Activated B cell treated with CpG ODN at 0.5 μM for 24 hours (primary cell): ENCODE measurements at regions of chr3 and their contacts with region 1.

Region 1: GRCh38 chr3:185282696-185283394 is 29.0 kb upstream of the EHHADH start:
- DNase-seq: peak; percentile 90
- ATAC-seq: peak; percentile 99
- H3K4me3 Mint-ChIP-seq: peak overlapping the region; percentile 95
- H3K27ac Mint-ChIP-seq: peak overlapping the region; percentile 80
- H3K4me1 Mint-ChIP-seq: peaks cover 21% of the 10 kb centered on the region
- H3K27me3 Mint-ChIP-seq: peaks cover 17% of the 10 kb centered on the region
- CTCF ChIP-seq: no peak

Region 2: GRCh38 chr3:183884427-183885296 is 1398.2 kb before region 1 on chr3 and contains the start of gene PARL:
- CTCF ChIA-PET with region 1: no interaction called
- POLR2A ChIA-PET with region 1: no interaction called
- intact Hi-C with region 1: loop called (anchors 10 kb)
- DNase-seq: peak; percentile 94
- ATAC-seq: peak; percentile 99
- H3K4me3 Mint-ChIP-seq: peak within 1 kb of the TSS; percentile 98
- H3K27ac Mint-ChIP-seq: peak within 1 kb of the TSS; percentile 85
- H3K4me1 Mint-ChIP-seq: peaks cover 36% of the 10 kb centered on the region
- H3K27me3 Mint-ChIP-seq: peaks cover 2% of the 10 kb centered on the region
- CTCF ChIP-seq: no peak
- total RNA-seq, gene PARL: 57.6 and 57.8 TPM in 2 replicates

Region 3: DNA sequence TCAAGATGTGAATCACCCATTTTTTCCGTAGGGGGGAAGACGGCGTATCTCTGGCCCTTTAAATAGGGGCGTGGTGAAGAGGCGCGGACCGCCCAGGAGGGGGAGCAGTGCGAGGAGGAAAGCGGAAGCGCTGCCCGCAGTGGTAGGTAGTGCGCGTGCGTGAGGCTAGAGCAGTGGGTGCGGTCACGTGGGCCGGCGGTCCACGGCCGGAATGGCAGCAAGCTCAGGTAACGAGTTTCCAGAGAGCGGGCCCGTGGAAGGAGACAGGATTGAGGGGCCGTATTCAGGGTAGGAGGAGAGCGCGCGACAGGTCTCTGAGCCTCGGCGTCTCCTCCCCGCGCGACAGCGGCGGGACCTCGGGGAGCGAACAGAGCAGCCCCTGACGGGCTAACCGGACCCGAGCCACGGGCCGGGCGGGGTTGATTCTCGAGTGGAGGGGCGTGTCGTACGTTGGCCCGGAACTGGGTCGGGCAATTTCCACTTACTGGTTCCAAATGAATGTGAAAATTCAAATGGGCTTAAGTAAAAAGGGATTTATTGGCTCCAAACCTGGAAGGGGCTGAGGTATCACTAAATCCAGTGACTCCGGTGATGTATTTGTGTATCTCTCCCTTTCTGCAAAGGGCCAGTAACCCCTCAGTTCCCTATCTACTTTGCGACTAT is 470.7 kb before region 1 on chr3 and contains the start of gene VPS8:
- CTCF ChIA-PET with region 1: no interaction called
- POLR2A ChIA-PET with region 1: no interaction called
- intact Hi-C with region 1: loop called (anchors 5 kb)
- DNase-seq: peak; percentile 95
- ATAC-seq: peak; percentile 92
- H3K4me3 Mint-ChIP-seq: peak within 1 kb of the TSS; percentile 96
- H3K27ac Mint-ChIP-seq: peak within 1 kb of the TSS; percentile 96
- H3K4me1 Mint-ChIP-seq: peaks cover 24% of the 10 kb centered on the region
- H3K27me3 Mint-ChIP-seq: no peaks in the 10 kb centered on the region
- CTCF ChIP-seq: no peak
- total RNA-seq, gene VPS8: 57.4 and 68.8 TPM in 2 replicates

Region 4: DNA sequence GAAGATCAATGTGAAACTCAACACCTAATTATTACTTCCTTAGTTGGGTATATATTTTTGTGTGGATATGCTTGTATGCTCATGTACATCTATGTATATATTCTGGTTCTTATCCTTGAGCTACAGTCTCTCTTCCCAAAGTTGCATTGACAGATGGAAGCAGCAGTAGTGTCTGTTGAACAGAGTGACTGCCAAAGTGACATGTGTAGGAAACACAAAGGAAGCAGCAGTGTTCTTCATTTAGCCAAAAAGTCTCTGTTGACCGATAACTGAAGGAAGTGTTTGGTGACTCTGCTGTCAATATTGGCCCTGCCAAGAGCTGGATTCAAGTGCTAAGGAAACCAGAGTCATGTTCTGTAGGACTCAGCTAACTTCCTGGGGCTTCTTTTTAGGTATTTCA is 253.8 kb before region 1 on chr3:
- CTCF ChIA-PET with region 1: no interaction called
- POLR2A ChIA-PET with region 1: no interaction called
- intact Hi-C with region 1: no loop called
- DNase-seq: no peak
- ATAC-seq: no peak
- H3K4me3 Mint-ChIP-seq: no peak overlapping the region
- H3K27ac Mint-ChIP-seq: no peak overlapping the region
- H3K4me1 Mint-ChIP-seq: no peaks in the 10 kb centered on the region
- H3K27me3 Mint-ChIP-seq: no peaks in the 10 kb centered on the region
- CTCF ChIP-seq: no peak

Region 5: DNA sequence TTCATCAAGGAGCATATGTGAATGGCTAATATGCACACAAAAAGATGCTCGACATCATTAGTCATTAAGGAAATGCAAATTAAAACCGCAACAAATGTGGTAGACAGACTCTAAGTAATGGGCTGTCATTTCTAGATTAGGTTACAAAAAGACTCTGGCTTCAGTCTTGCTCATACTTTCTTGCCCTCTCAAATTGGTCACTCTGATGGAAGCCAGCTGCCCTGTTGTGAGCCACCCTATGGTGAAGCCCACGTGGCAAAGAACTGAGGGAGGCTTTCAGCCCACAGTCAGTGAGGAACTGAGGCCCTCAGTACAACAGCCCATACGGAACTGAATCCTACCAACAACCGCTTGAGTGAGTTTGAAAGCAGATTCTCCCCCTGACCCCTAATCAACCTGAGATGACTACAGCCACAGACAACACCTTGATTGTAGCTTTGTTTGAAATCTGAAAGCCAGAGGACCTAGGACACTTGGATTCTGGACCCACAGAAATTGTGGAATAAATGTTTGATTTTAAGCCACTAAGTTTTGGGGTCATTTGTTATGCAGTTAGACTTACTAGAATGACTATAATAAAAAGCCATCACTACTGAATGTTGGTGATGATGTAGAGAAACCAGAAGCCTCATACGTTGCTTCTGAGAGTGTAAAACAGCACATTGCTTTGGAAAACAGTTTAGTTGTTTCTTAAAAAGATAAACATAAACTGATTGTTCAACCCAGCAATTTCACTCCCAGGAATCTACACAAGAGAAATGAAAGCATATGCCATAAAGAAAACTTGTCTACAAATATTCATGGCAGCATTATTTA is 74.7 kb before region 1 on chr3:
- CTCF ChIA-PET with region 1: no interaction called
- POLR2A ChIA-PET with region 1: no interaction called
- intact Hi-C with region 1: loop called (anchors 5 kb)
- DNase-seq: no peak
- ATAC-seq: peak; percentile 92
- H3K4me3 Mint-ChIP-seq: peak overlapping the region; percentile 38
- H3K27ac Mint-ChIP-seq: peak overlapping the region; percentile 78
- H3K4me1 Mint-ChIP-seq: peaks cover 16% of the 10 kb centered on the region
- H3K27me3 Mint-ChIP-seq: no peaks in the 10 kb centered on the region
- CTCF ChIP-seq: no peak

Region 6: DNA sequence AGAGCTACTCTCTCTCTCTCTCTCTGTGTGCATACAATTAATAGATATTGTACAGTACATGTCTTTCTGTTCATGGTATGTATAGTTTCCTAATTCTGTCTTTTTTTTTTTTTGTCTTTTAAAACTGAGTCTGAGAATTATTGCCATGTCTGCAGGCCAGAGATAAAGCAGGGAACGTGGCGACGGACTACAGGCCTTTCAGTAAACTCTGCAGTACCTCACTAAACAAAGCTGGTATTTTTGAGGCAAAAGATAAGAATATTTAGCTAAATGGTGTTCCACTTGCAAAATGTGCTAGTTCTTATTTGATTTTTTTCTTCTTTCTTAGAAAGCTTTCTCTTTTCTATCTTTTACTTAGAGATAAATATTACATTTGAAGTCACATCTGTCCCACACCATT is 15.0 kb after region 1 on chr3:
- CTCF ChIA-PET with region 1: no interaction called
- POLR2A ChIA-PET with region 1: no interaction called
- intact Hi-C with region 1: no loop called
- DNase-seq: no peak
- ATAC-seq: no peak
- H3K4me3 Mint-ChIP-seq: no peak overlapping the region
- H3K27ac Mint-ChIP-seq: no peak overlapping the region
- H3K4me1 Mint-ChIP-seq: peaks cover 13% of the 10 kb centered on the region
- H3K27me3 Mint-ChIP-seq: no peaks in the 10 kb centered on the region
- CTCF ChIP-seq: no peak

Region 7: GRCh38 chr3:185498503-185499396 is 215.9 kb after region 1 on chr3 and contains the start of gene TMEM41A:
- CTCF ChIA-PET with region 1: no interaction called
- POLR2A ChIA-PET with region 1: no interaction called
- intact Hi-C with region 1: loop called (anchors 5 kb)
- DNase-seq: peak; percentile 86
- ATAC-seq: peak; percentile 99
- H3K4me3 Mint-ChIP-seq: peak within 1 kb of the TSS; percentile 92
- H3K27ac Mint-ChIP-seq: peak within 1 kb of the TSS; percentile 73
- H3K4me1 Mint-ChIP-seq: peaks cover 19% of the 10 kb centered on the region
- H3K27me3 Mint-ChIP-seq: no peaks in the 10 kb centered on the region
- CTCF ChIP-seq: no peak
- total RNA-seq, gene TMEM41A: 20.7 and 23.3 TPM in 2 replicates

Region 8: GRCh38 chr3:185585859-185586685 is 303.2 kb after region 1 on chr3 and contains the start of gene SENP2:
- CTCF ChIA-PET with region 1: no interaction called
- POLR2A ChIA-PET with region 1: no interaction called
- intact Hi-C with region 1: loop called (anchors 1 kb)
- DNase-seq: peak; percentile 98
- ATAC-seq: peak; percentile 95
- H3K4me3 Mint-ChIP-seq: peak within 1 kb of the TSS; percentile 97
- H3K27ac Mint-ChIP-seq: peak within 1 kb of the TSS; percentile 97
- H3K4me1 Mint-ChIP-seq: peaks cover 39% of the 10 kb centered on the region
- H3K27me3 Mint-ChIP-seq: no peaks in the 10 kb centered on the region
- CTCF ChIP-seq: no peak
- total RNA-seq, gene SENP2: 42.2 and 47.1 TPM in 2 replicates

Region 9: DNA sequence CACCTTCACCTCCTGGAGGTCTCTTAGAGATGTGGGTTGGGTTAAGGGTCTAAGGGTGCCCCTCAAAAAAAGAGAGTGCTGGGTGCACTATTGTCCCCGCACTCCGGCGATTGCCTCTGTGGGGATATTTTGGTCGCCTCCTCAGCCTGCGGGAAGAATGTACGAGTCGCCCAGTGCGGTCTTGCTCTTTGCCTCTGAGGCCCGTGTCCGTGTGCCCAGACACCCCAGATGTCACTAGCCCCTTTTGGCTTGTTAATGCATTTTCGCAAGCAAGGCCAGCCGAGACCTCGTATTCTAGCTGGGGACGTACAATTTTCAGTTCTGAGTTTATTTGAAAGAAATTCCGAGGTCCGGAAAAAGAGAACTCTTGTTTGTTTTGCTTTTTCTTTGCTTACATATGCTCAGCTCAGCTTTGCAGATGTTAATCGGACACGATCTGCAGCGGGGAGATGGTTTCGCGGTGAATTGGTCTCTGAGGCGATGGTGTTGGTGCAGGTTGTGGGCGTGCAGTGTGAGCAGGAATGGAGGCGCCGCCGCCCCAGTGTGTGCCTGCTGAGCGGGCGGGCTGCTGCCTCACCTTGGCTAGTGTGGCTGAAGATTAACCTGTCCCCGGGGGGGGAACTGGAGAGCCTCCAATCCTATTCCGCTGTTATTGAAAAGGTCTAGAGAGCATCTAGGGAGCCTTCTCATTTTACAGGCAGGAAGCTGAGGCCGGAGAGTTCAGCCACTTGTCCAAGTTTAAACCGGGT is 1648.9 kb after region 1 on chr3:
- CTCF ChIA-PET with region 1: no interaction called
- POLR2A ChIA-PET with region 1: no interaction called
- intact Hi-C with region 1: no loop called
- DNase-seq: peak; percentile 35
- ATAC-seq: peak; percentile 12
- H3K4me3 Mint-ChIP-seq: peak overlapping the region; percentile 98
- H3K27ac Mint-ChIP-seq: peak overlapping the region; percentile 94
- H3K4me1 Mint-ChIP-seq: peaks cover 51% of the 10 kb centered on the region
- H3K27me3 Mint-ChIP-seq: no peaks in the 10 kb centered on the region
- CTCF ChIP-seq: no peak